AG04449 (cell line): ENCODE measurements at regions of chr17 and their contacts with region 1.

Region 1: DNA sequence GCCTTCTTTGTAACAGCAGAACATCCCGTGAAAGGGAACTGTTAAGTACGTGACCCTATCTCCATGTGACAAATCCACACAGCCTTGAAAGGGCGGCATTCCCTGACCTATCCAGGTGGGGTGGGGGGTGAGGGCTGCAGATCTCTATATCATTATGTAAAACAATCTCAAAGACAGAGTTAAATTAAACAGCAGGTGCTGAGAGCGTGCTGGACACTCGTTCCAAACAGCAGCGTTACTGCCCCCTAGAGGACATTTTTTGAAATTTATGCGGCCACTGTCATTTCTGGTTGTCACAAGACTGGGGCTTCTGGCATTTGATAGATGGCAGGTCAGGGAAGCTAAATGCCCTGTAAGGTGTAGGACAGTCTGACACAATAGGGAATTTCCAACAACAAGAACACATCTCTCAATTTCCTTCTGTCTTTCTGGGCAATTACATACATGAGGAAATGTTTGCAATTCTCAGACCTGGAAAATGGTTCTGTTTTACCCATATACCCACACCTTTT is 6.7 kb upstream of the SLC25A39 start:
- DNase-seq: no peak
- H3K4me3 ChIP-seq: no peak overlapping the region
- CTCF ChIP-seq: peak; percentile 61

Region 2: DNA sequence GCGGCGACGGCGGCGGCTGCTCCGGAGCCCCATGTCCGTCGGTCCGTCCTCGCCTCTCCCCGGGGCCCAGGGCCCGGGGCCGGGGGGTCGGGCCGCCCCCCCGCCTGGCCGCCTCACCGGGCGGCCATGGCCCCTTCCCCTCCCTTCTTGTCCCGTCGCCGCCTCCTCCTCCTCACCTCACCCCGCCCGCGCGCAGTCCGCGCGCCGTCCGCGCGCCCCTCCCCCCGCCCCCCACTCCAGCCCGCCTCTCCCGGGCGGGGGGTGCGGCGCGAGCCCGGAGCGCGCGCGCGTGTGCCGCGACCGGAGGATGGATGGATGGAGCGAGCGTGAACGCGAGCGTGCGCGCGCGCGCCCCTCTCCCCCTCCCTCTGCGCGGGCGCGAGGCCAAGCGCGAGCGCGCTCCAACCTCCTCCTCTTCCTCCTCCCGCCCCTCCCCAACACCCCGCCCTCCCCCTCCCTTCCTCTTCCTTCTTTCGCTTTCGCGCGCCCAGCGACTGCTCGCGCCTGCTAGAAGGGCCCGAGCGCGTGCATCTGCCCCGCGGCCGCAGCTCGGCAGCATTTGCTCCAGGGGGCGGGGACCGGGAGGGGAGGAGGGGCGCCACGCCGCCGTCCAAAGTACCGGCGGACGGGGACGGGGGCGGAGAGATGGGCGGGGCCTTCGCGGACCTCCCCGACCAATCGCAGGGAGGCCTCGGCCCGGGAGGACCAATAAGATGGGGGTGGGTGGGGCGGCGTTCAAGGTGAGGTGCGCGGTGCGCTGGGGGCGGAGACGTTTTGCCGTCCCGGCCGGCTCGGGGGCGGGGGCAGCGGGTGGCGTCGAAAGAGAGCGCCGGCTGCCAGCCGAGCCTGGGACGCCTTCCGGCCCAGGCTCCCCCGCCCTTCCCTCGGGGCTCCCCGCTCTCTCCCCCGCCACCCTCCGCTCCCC is 131.5 kb before region 1 on chr17 and contains the start of gene ATXN7L3:
- CTCF ChIA-PET with region 1: interaction called, 14 read pairs
- POLR2A ChIA-PET with region 1: no interaction called
- DNase-seq: peak; percentile 81
- H3K4me3 ChIP-seq: peak within 1 kb of the TSS; percentile 79
- CTCF ChIP-seq: no peak

Region 3: GRCh38 chr17:44218344-44219107 is 112.8 kb before region 1 on chr17:
- CTCF ChIA-PET with region 1: interaction called, 130 read pairs
- POLR2A ChIA-PET with region 1: interaction called, 8 read pairs
- DNase-seq: no peak
- H3K4me3 ChIP-seq: peak overlapping the region; percentile 82
- CTCF ChIP-seq: peak; percentile 70

Region 4: GRCh38 chr17:44314869-44315661 is 16.2 kb before region 1 on chr17:
- CTCF ChIA-PET with region 1: interaction called, 21 read pairs
- POLR2A ChIA-PET with region 1: interaction called, 6 read pairs
- DNase-seq: no peak
- H3K4me3 ChIP-seq: peak overlapping the region; percentile 43
- CTCF ChIP-seq: no peak

Region 5: DNA sequence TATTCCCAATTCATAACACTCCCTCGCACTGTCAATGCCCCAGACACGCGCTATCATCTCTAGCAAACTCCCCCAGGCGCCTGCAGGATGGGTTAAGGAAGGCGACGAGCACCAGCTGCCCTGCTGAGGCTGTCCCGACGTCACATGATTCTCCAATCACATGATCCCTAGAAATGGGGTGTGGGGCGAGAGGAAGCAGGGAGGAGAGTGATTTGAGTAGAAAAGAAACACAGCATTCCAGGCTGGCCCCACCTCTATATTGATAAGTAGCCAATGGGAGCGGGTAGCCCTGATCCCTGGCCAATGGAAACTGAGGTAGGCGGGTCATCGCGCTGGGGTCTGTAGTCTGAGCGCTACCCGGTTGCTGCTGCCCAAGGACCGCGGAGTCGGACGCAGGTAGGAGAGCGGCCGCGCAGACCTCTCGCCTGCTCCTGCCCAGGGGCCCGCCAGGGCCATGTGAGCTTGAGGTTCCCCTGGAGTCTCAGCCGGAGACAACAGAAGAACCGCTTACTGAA is 13.7 kb after region 1 on chr17 and contains the start of gene GRN:
- CTCF ChIA-PET with region 1: interaction called, 43 read pairs
- POLR2A ChIA-PET with region 1: interaction called, 4 read pairs
- DNase-seq: peak; percentile 93
- H3K4me3 ChIP-seq: peak within 1 kb of the TSS; percentile 95
- CTCF ChIP-seq: no peak

Region 6: DNA sequence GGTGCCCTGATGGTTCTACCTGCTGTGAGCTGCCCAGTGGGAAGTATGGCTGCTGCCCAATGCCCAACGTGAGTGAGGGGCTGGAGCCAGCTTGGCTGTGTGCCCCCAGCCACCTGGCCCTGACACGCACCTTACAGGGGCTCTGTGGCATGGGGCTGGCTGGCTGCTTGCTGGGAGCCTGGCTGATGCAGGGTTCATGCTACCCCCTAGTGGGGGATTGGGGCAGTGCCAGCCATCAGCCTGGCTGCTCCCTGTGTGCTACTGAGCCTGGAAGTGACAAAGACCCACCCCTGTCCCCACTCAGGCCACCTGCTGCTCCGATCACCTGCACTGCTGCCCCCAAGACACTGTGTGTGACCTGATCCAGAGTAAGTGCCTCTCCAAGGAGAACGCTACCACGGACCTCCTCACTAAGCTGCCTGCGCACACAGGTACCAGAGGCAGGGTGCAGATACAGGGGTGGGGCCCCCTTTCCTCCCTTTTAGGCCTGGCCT is 19.5 kb after region 1 on chr17:
- CTCF ChIA-PET with region 1: interaction called, 37 read pairs
- POLR2A ChIA-PET with region 1: interaction called, 4 read pairs
- DNase-seq: no peak
- H3K4me3 ChIP-seq: no peak overlapping the region
- CTCF ChIP-seq: peak; percentile 87

Region 7: DNA sequence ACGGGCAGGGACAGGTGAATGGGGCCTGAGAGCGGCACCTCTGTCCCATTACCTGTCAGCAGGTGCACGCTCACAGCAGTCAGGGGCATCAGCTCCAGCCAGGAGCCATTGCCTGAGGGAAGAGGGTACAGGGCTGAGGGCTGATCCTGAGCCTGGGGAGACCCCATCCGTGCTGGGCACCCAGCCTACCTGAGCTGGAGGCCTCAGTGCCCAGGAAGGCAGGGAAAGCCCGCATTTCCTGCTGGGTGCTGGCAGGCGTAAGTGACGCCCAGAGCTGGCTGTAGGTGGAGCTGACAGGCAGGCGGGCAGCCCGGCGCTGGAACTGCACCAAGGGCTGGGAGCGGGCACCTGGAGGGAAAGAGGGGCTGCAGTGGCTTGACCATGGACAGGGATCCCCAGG is 24.9 kb after region 1 on chr17:
- CTCF ChIA-PET with region 1: interaction called, 22 read pairs
- POLR2A ChIA-PET with region 1: no interaction called
- DNase-seq: no peak
- H3K4me3 ChIP-seq: no peak overlapping the region
- CTCF ChIP-seq: no peak

Region 8: GRCh38 chr17:44496815-44497214 is 165.5 kb after region 1 on chr17:
- CTCF ChIA-PET with region 1: no interaction called
- POLR2A ChIA-PET with region 1: no interaction called
- DNase-seq: no peak
- H3K4me3 ChIP-seq: no peak overlapping the region
- CTCF ChIP-seq: no peak